Uterus (tissue), 4 donors: ENCODE measurements at regions of chr14 and their contacts with region 1.

Region 1: DNA sequence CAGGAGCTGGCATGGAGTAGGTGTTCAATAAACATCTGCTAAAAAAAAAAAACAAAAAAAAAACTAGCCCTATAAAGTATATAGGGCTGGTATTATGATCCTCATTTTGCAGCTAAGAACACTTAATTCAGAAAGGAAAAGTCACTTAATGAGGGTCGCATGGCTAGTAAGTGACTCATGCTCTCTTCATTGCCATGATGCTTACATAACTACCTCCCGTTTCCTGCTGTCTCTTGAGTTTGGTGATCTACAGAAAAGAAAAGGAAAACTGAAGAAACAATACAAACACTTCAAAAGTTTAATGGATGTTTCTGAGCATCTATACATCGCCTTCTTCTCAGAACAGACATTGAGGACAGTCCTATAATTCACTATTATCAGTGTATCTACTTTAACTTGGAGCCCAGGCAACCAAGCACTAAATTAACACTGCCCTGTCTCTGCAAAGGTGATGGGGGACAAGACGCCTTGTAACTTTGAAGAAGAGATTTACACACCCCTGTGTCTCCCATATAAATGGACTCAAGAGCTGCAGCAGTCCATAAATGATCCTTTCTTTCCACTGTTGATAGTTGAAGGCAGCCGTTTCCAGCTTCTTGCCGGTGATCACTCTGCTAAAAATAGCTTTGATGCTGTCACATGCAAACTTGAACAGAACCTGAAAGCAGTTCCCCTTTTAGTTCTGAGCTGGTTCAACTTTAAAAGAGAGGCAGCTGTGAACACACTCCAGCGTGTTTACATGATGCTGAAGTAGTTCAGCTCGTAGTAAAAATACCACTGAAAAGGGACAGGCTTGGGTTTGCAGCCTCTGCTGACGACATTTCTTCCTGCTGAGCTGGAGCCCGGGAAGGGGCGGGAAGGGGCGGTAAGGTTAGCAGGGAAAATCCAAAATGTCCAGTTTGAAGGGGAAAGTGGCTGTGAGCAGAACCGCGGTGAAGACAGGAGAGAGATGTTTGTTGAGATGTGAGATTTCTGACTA is 113.3 kb downstream of the FOXN3 start:
- DNase-seq: peak; percentile 61 to 65
- H3K4me3 ChIP-seq: peak overlapping the region; percentile 14 to 22
- H3K27ac ChIP-seq: peak overlapping the region; percentile 83 to 96
- H3K4me1 ChIP-seq: peaks cover 4 to 11% of the 10 kb centered on the region in 2 donors
- H3K27me3 ChIP-seq: no peaks in the 10 kb centered on the region
- CTCF ChIP-seq: no peak
- POLR2A ChIP-seq: peak; percentile 13 to 29

Region 2: GRCh38 chr14:88695870-88696269 is 607.9 kb before region 1 on chr14:
- intact Hi-C with region 1: no loop called
- DNase-seq: no peak
- H3K4me3 ChIP-seq: no peak overlapping the region
- H3K27ac ChIP-seq: no peak overlapping the region
- H3K4me1 ChIP-seq: no peaks in the 10 kb centered on the region
- H3K27me3 ChIP-seq: no peaks in the 10 kb centered on the region
- CTCF ChIP-seq: no peak
- POLR2A ChIP-seq: no peak

Region 3: GRCh38 chr14:89027097-89027740 is 276.5 kb before region 1 on chr14:
- intact Hi-C with region 1: no loop called
- DNase-seq: peak; percentile 23 to 46
- H3K4me3 ChIP-seq: peak overlapping the region; percentile 35 to 37
- H3K27ac ChIP-seq: no peak overlapping the region
- H3K4me1 ChIP-seq: peaks cover 0 to 9% of the 10 kb centered on the region in 2 donors
- H3K27me3 ChIP-seq: peaks cover 0 to 12% of the 10 kb centered on the region in 2 donors
- CTCF ChIP-seq: peak; percentile 68 to 88 (median 82)
- POLR2A ChIP-seq: no peak

Region 4: DNA sequence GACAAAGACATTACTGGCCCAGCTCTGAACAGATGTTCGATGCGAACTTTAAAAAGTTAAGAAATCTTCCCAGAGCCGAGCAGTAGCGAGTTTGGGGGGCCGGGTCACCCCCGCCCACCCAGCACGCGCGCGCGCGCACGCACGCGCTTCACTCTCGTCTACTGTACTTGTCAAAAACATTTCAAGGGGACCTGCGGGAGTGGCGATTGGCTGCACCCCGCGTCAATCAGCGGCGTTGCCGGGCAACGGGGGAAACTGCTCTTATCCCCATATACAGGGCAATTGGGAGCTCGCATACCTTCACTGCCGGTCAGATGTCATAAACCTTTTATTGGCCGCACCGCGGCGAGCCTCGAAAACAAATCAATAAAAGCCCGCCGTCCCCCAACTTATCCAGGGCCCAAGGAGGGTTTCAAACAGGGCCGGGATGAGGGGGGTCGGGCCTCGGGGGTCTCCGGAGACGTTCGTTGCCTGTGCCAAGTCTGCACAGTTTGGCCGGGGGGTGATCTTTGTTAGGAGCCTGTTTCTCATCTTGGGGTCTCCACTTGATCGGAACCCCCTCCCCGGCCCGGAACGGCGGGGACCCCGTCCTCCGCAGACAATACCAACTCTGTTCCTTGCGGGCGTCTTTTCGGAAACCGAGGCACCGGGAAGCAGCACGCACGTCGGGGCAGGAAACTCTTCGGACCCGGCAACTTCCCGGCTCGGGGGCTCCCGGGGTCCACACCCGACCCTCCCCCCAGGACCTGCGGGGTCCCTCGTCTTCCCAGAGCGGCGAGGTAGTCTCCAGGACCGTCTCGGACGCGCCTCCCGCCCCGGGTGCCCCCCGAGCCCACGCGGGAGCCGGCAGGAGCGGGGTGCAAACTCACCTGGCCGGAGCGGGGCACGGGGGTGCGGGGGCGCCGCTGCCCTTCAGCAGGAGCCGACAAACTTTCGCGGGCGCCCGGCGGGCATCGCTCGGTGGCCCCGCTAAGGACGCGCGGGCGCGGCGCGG is 112.6 kb after region 1 on chr14:
- intact Hi-C with region 1: loop called (anchors 10 kb)
- DNase-seq: peak; percentile 98 to 99
- H3K4me3 ChIP-seq: peak overlapping the region; percentile 62 to 100
- H3K27ac ChIP-seq: peak overlapping the region; percentile 92 to 99
- H3K4me1 ChIP-seq: peaks cover 3 to 4% of the 10 kb centered on the region in 2 donors
- H3K27me3 ChIP-seq: no peaks in the 10 kb centered on the region
- CTCF ChIP-seq: no peak
- POLR2A ChIP-seq: peak in 1 of 2 donors; percentile 43